ENCODE measurements at regions of chr19 and their contacts with region 1.

Region 1: GRCh38 chr19:48363810-48364563 is at the starts of genes SYNGR4 and TMEM143:
- DNase-seq: peak; percentile 98 to 99 (median 99)
- H3K4me3 ChIP-seq: peak within 1 kb of the TSS; percentile 93 to 94
- H3K4me3 Mint-ChIP-seq: peak within 1 kb of the TSS; percentile 87 to 96 (median 94)
- H3K27ac ChIP-seq: peak within 1 kb of the TSS; percentile 88
- H3K27ac Mint-ChIP-seq: peak within 1 kb of the TSS; percentile 87 to 98 (median 92)
- H3K4me1 ChIP-seq: peaks cover 17% of the 10 kb centered on the region
- H3K4me1 Mint-ChIP-seq: peaks cover 4 to 14% (median 5%) of the 10 kb centered on the region in 4 donors
- H3K27me3 ChIP-seq: no peaks in the 10 kb centered on the region
- H3K27me3 Mint-ChIP-seq: no peaks in the 10 kb centered on the region
- total RNA-seq, gene SYNGR4: not detected
- total RNA-seq, gene TMEM143: 27.6 to 31.8 TPM

Region 2: DNA sequence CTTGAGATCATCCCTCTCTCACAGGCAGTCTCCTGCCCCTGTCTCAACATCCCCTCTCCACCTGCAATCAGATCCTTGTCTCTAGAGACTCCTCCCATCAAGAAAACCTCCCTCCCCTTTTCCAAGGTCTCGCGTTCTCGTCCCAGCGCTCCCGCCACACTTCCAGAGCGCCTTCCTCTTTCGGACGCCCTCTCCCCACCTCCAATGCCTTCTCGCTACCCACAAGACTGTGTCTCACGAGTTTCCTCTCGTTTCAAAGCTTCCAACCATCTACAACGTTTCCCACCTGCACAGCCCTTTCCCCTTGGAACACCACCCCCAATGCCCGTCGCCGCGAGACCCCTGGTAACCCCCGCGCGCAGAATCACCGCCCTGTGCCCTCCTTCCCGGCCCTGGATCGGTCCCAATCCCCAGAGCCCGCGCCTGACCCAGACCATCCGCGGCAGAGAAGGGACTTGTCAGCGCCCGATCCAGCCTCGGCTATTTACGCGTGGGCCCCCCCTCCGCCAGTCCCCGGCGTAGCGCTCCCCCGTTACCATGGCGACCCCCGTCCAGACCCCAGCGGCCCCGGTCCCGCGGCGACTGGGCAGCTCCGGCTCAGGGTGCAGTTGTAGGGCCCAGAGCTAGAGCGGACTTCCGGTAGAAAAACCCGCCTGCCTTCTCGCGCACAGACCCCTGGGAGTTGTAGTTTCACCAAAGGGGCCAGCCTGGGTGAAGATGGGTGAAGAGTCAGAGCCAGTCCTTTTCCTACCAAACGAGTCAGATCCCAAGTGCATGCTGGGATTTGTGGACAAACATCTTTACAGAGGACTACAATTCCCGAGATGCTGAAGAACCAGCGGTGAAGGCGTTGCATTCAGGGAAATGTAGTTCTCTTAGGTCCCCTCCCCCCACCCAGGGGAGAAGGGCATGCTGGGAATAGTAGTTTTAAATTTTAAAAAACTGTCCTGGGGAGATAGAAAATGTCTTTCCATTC is 1513.5 kb before region 1 on chr19 and contains the start of gene AP2S1:
- CTCF ChIA-PET with region 1: no interaction called
- POLR2A ChIA-PET with region 1: no interaction called
- intact Hi-C with region 1: loop called (anchors 10 kb)
- DNase-seq: peak; percentile 93 to 99 (median 95)
- H3K4me3 ChIP-seq: peak within 1 kb of the TSS; percentile 62 to 86
- H3K4me3 Mint-ChIP-seq: peak within 1 kb of the TSS; percentile 78 to 97 (median 94)
- H3K27ac ChIP-seq: peak within 1 kb of the TSS; percentile 85
- H3K27ac Mint-ChIP-seq: peak within 1 kb of the TSS; percentile 62 to 96 (median 93)
- H3K4me1 ChIP-seq: peaks cover 13% of the 10 kb centered on the region
- H3K4me1 Mint-ChIP-seq: peaks cover 19 to 33% (median 24%) of the 10 kb centered on the region in 4 donors
- H3K27me3 ChIP-seq: no peaks in the 10 kb centered on the region
- H3K27me3 Mint-ChIP-seq: no peaks in the 10 kb centered on the region
- total RNA-seq, gene AP2S1: 40.7 to 42.1 TPM

Region 3: GRCh38 chr19:48333467-48334384 is 30.3 kb before region 1 on chr19:
- CTCF ChIA-PET with region 1: interaction called, 7 read pairs
- POLR2A ChIA-PET with region 1: interaction called, 65 read pairs
- intact Hi-C with region 1: loop called (anchors 2 kb)
- DNase-seq: peak; percentile 92 to 94 (median 93)
- H3K4me3 ChIP-seq: peak overlapping the region; percentile 81 to 93
- H3K4me3 Mint-ChIP-seq: peak overlapping the region; percentile 88 to 97 (median 94)
- H3K27ac ChIP-seq: peak overlapping the region; percentile 99
- H3K27ac Mint-ChIP-seq: peak overlapping the region; percentile 94 to 99 (median 98)
- H3K4me1 ChIP-seq: peaks cover 48% of the 10 kb centered on the region
- H3K4me1 Mint-ChIP-seq: peaks cover 23 to 60% (median 36%) of the 10 kb centered on the region in 4 donors
- H3K27me3 ChIP-seq: no peaks in the 10 kb centered on the region
- H3K27me3 Mint-ChIP-seq: no peaks in the 10 kb centered on the region

Region 4: GRCh38 chr19:48403606-48404005 is 39.6 kb after region 1 on chr19:
- CTCF ChIA-PET with region 1: no interaction called
- POLR2A ChIA-PET with region 1: interaction called, 11 read pairs
- intact Hi-C with region 1: no loop called
- DNase-seq: peak; percentile 32 to 65 (median 47)
- H3K4me3 ChIP-seq: no peak overlapping the region
- H3K4me3 Mint-ChIP-seq: no peak overlapping the region
- H3K27ac ChIP-seq: no peak overlapping the region
- H3K27ac Mint-ChIP-seq: peak overlapping the region in 2 of 7 donors; percentile 24 to 62
- H3K4me1 ChIP-seq: no peaks in the 10 kb centered on the region
- H3K4me1 Mint-ChIP-seq: peaks cover 8 to 31% (median 16%) of the 10 kb centered on the region in 4 donors
- H3K27me3 ChIP-seq: no peaks in the 10 kb centered on the region
- H3K27me3 Mint-ChIP-seq: peaks cover 2 to 7% of the 10 kb centered on the region in 2 donors

Region 5: DNA sequence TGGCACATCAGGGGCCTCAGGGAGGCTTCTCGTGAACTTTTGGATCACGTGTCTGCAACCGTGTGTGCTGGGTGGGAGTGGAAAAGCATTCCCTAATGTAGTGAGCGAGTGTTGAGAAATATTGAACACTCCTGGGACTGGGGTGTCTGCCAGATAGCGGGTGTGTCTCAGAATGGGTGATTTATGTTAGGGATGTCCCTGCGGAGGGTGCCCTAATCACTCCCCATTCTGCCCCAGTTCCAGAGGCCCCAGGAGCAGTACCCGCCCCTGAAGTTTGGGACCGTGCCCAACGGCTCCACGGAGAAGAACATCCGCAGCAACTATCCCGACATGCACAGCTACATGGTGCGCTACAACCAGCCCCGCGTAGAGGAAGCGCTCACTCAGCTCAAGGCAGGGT is 57.6 kb after region 1 on chr19:
- CTCF ChIA-PET with region 1: no interaction called
- POLR2A ChIA-PET with region 1: no interaction called
- intact Hi-C with region 1: no loop called
- DNase-seq: no peak
- H3K4me3 ChIP-seq: no peak overlapping the region
- H3K4me3 Mint-ChIP-seq: no peak overlapping the region
- H3K27ac ChIP-seq: no peak overlapping the region
- H3K27ac Mint-ChIP-seq: no peak overlapping the region
- H3K4me1 ChIP-seq: peaks cover 4% of the 10 kb centered on the region
- H3K4me1 Mint-ChIP-seq: peaks cover 6 to 18% (median 15%) of the 10 kb centered on the region in 4 donors
- H3K27me3 ChIP-seq: no peaks in the 10 kb centered on the region
- H3K27me3 Mint-ChIP-seq: peaks cover 2% of the 10 kb centered on the region in 2 donors

Region 6: GRCh38 chr19:48468775-48469288 is 104.8 kb after region 1 on chr19:
- CTCF ChIA-PET with region 1: no interaction called
- POLR2A ChIA-PET with region 1: interaction called, 3 read pairs
- intact Hi-C with region 1: loop called (anchors 1 kb)
- DNase-seq: peak; percentile 99 to 100 (median 100)
- H3K4me3 ChIP-seq: peak overlapping the region in 1 of 2 donors; percentile 65
- H3K4me3 Mint-ChIP-seq: peak overlapping the region; percentile 89 to 96 (median 92)
- H3K27ac ChIP-seq: peak overlapping the region; percentile 81
- H3K27ac Mint-ChIP-seq: peak overlapping the region; percentile 83 to 98 (median 95)
- H3K4me1 ChIP-seq: peaks cover 18% of the 10 kb centered on the region
- H3K4me1 Mint-ChIP-seq: peaks cover 7 to 24% (median 13%) of the 10 kb centered on the region in 4 donors
- H3K27me3 ChIP-seq: no peaks in the 10 kb centered on the region
- H3K27me3 Mint-ChIP-seq: no peaks in the 10 kb centered on the region

Region 7: DNA sequence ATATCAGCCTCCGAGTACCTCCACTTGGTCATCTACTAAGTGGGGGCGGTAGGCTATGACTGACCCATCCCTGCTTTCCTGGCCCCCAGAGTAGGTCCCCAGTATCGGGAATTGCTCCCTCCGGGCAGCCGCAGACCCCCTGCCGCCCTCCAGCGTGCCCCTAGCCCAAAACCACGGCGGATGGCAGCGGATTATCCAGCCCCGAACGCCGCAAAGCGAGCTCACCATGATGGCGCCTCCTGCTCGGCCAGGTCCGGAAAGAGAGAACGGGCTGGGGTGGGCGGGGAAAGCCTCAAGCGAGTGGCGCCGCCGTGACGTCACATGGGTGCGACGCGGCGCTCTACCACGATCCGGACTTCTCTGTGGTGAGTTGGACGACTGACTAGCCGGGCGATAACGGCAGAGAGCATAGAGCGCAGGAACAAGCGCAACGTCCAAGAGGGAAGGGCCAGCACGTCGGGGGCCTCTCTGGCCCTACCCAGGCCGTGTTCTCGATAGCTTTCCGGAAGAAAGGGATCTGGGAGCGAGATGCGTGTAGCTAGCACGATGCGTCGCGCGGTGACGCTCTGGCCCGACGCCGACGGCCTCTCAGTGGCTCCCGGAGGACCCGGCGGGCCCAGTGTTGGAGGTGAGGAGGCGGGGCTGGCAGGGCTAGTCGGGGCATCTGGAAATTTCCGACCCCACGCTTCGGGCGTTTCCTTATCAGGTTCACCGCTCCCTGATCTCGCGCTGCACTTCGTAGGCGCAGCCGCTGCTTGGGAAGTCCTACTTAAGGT is 255.1 kb after region 1 on chr19 and contains the starts of genes RPL18 and SPHK2:
- CTCF ChIA-PET with region 1: no interaction called
- POLR2A ChIA-PET with region 1: interaction called, 11 read pairs
- intact Hi-C with region 1: no loop called
- DNase-seq: peak; percentile 94 to 97 (median 96)
- H3K4me3 ChIP-seq: peak within 1 kb of the TSS; percentile 76 to 81
- H3K4me3 Mint-ChIP-seq: peak within 1 kb of the TSS; percentile 95 to 98 (median 96)
- H3K27ac ChIP-seq: peak within 1 kb of the TSS; percentile 88
- H3K27ac Mint-ChIP-seq: peak within 1 kb of the TSS; percentile 97 to 99 (median 98)
- H3K4me1 ChIP-seq: peaks cover 50% of the 10 kb centered on the region
- H3K4me1 Mint-ChIP-seq: peaks cover 27 to 74% (median 49%) of the 10 kb centered on the region in 4 donors
- H3K27me3 ChIP-seq: no peaks in the 10 kb centered on the region
- H3K27me3 Mint-ChIP-seq: no peaks in the 10 kb centered on the region
- total RNA-seq, gene RPL18: 2,357 to 2,448 TPM
- total RNA-seq, gene SPHK2: 25.0 to 29.1 TPM

Region 8: GRCh38 chr19:48720613-48721296 is 356.8 kb after region 1 on chr19:
- CTCF ChIA-PET with region 1: no interaction called
- POLR2A ChIA-PET with region 1: no interaction called
- intact Hi-C with region 1: loop called (anchors 1 kb)
- DNase-seq: peak; percentile 91 to 97 (median 92)
- H3K4me3 ChIP-seq: peak overlapping the region; percentile 50 to 75
- H3K4me3 Mint-ChIP-seq: peak overlapping the region; percentile 94 to 99 (median 98)
- H3K27ac ChIP-seq: peak overlapping the region; percentile 72
- H3K27ac Mint-ChIP-seq: peak overlapping the region; percentile 94 to 100 (median 99)
- H3K4me1 ChIP-seq: peaks cover 19% of the 10 kb centered on the region
- H3K4me1 Mint-ChIP-seq: peaks cover 15 to 34% (median 25%) of the 10 kb centered on the region in 4 donors
- H3K27me3 ChIP-seq: no peaks in the 10 kb centered on the region
- H3K27me3 Mint-ChIP-seq: no peaks in the 10 kb centered on the region

Measured in CD4-positive, alpha-beta memory T cell (primary cell).